ENCODE measurements at regions of chr7 and their contacts with region 1.

Region 1: DNA sequence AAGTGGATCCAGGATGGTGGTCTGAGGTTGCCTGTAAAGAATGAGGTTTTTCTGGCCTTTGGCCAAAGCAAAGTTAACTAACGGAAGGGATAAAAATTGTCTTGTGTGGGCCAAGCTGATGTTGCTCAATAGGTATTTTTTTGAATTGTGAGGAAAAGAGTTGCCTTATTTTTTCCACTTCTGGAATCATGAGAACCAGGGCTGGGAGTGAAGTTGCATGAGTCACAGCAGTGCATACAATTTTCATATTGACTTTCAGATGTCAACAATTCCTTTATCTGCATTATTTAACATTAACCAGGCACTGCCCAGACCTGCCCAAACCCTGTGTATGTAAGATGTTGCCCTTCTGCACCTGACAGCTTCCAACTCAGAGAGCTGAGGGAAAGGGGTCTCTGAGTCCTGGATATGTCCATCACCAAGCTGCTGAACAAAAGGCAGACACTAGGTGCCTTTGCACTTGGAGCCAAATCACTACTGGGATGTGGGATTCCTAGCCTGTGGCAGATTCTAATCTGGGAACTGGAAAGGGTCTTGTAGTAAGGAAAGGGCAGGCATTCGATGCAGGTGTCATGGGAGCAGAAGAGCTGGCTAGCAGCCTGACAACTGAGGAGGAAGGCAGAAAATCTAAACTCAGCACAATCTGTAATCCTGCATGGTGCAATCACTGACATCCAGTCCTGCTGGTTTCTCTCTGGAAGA is 52.3 kb upstream of the SLC35B4 start:
- DNase-seq: peak; percentile 65
- H3K4me3 Mint-ChIP-seq: peak overlapping the region; percentile 57
- H3K27ac Mint-ChIP-seq: peak overlapping the region; percentile 90
- H3K4me1 Mint-ChIP-seq: peaks cover 66% of the 10 kb centered on the region
- H3K27me3 Mint-ChIP-seq: no peaks in the 10 kb centered on the region
- CTCF ChIP-seq: no peak

Region 2: DNA sequence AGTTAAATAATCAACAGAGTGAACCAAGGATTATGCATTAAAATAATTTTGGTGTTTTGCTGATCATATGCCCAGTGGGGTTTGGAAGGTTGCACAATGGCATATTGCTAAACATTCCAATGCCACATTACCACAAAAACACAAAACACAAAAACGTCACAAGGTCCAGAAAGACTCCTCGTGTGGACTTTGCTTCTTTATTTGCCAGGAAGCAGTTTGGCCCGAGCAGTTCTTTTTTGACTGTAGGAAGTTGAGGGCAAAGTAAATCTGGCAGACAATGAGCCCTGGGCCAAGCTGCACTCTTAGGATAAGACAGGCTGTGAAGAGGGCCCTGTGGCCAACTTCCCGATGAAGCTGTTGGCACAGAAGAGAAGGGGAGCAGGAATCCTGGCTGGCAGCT is 13.1 kb before region 1 on chr7:
- CTCF ChIA-PET with region 1: interaction called, 10 read pairs
- intact Hi-C with region 1: no loop called
- DNase-seq: peak; percentile 44
- H3K4me3 Mint-ChIP-seq: peak overlapping the region; percentile 35
- H3K27ac Mint-ChIP-seq: peak overlapping the region; percentile 93
- H3K4me1 Mint-ChIP-seq: peaks cover 36% of the 10 kb centered on the region
- H3K27me3 Mint-ChIP-seq: no peaks in the 10 kb centered on the region
- CTCF ChIP-seq: no peak

Region 3: GRCh38 chr7:134514663-134515062 is 145.7 kb after region 1 on chr7:
- CTCF ChIA-PET with region 1: no interaction called
- intact Hi-C with region 1: loop called (anchors 10 kb)
- DNase-seq: peak; percentile 66
- H3K4me3 Mint-ChIP-seq: no peak overlapping the region
- H3K27ac Mint-ChIP-seq: no peak overlapping the region
- H3K4me1 Mint-ChIP-seq: peaks cover 40% of the 10 kb centered on the region
- H3K27me3 Mint-ChIP-seq: no peaks in the 10 kb centered on the region
- CTCF ChIP-seq: peak; percentile 71